Activated T-helper 2 cell treated with anti-CD3 and anti-CD28 coated beads, Interferon-gamma antibody, Interleukin-2, Interleukin-4, amounts not matched to agents 10 μg/mL and 5 μg/mL and 100 μg/mL, durations not matched to agents 14 hours and 24 hours and 36 hours (primary cell): ENCODE measurements at regions of chr11 and their contacts with region 1.

Region 1: DNA sequence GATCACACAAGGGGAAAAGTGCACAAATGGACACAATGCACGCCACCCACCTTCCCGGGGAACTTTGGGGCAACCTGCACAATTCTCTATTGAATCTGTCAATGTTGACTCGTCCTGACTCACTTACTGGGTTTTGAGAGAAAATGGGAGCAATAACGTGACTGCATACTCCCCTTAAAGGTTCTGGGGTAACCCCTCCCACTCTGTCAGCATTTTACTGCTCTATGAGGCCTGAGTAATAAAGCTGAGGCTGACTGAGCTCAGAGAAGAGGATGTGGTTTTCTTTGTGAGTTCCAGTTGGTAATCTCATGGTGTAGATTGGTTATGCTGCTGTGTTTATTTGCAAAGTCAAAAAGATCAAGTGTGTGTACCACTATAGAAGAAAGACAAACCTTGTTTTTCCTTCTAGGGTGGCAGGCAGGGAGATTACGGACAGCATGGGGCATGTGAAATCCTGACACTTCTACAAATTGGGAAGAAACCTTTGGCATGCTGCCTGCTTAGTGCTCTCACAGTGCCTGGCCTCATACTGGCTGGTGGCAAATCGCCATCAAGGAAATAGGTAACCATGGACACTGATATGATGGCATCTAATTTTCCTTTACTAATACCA is 16.1 kb upstream of the APOA1 start:
- DNase-seq: peak; percentile 69
- H3K4me3 Mint-ChIP-seq: peak overlapping the region; percentile 53
- H3K27ac Mint-ChIP-seq: peak overlapping the region; percentile 90
- H3K4me1 Mint-ChIP-seq: peaks cover 52% of the 10 kb centered on the region
- H3K27me3 Mint-ChIP-seq: no peaks in the 10 kb centered on the region

Region 2: GRCh38 chr11:116366980-116367645 is 486.5 kb before region 1 on chr11:
- intact Hi-C with region 1: no loop called
- DNase-seq: no peak
- H3K4me3 Mint-ChIP-seq: no peak overlapping the region
- H3K27ac Mint-ChIP-seq: no peak overlapping the region
- H3K4me1 Mint-ChIP-seq: no peaks in the 10 kb centered on the region
- H3K27me3 Mint-ChIP-seq: no peaks in the 10 kb centered on the region

Region 3: GRCh38 chr11:116762132-116762531 is 91.4 kb before region 1 on chr11:
- intact Hi-C with region 1: no loop called
- DNase-seq: no peak
- H3K4me3 Mint-ChIP-seq: no peak overlapping the region
- H3K27ac Mint-ChIP-seq: no peak overlapping the region
- H3K4me1 Mint-ChIP-seq: peaks cover 9% of the 10 kb centered on the region
- H3K27me3 Mint-ChIP-seq: no peaks in the 10 kb centered on the region

Region 4: DNA sequence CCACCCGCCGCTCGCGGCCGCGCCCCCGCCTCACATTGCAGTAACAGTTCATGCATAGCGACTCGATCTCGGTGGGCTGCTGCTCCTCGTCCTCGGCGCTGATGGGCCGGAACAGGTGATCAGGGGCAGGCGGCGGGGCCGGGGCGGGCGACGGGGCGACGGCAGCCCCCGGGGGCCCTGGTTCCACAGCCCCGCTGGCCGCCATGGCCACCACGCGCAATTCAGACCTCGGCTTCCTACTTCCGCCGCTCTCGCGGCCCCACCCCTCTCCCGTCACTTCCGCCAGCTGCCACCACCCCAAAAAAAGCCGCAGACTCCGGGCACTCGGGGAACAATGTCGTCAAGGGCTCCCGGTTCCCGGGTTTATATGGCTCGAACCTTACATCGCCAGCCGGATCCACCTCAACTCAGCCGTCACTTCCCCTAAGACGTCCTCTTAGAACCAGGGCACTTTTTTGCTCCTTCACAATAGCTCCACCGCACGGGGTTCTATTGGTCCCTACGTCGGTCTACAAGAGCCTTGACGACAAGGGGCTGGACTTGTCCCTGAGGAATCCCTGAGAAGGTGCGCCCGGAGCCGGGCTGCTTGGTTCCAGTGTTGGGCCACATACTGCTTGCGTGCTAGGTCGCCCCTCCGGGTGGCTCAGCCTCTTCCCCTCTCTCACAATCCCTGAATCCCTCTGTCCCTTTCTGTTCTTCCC is 65.6 kb before region 1 on chr11 and contains the start of gene ZPR1:
- intact Hi-C with region 1: loop called (anchors 5 kb)
- DNase-seq: peak; percentile 83
- H3K4me3 Mint-ChIP-seq: peak within 1 kb of the TSS; percentile 90
- H3K27ac Mint-ChIP-seq: peak within 1 kb of the TSS; percentile 81
- H3K4me1 Mint-ChIP-seq: peaks cover 44% of the 10 kb centered on the region
- H3K27me3 Mint-ChIP-seq: no peaks in the 10 kb centered on the region
- total RNA-seq, gene ZPR1: 84.1 and 84.7 TPM in 2 replicates

Region 5: DNA sequence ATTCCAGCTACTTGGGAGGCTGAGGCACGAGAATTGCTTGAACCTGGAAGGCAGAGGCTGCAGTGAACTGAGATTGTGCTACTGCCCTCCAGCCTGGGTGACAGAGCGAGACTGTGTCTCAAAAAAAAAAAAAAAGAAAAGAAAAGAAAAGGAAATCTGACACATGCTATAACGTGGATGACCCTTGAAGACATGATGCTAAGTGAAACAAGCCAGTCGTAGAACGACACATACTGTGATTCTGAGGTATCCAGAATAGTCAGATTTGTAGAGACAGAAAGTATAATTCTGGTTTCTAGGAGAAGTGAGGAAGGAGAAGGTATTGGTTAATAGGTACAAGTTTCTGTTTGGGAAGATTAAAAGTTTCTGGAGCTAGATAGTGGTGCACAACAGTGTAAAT is 55.2 kb before region 1 on chr11:
- intact Hi-C with region 1: no loop called
- DNase-seq: no peak
- H3K4me3 Mint-ChIP-seq: no peak overlapping the region
- H3K27ac Mint-ChIP-seq: no peak overlapping the region
- H3K4me1 Mint-ChIP-seq: no peaks in the 10 kb centered on the region
- H3K27me3 Mint-ChIP-seq: peaks cover 13% of the 10 kb centered on the region

Region 6: DNA sequence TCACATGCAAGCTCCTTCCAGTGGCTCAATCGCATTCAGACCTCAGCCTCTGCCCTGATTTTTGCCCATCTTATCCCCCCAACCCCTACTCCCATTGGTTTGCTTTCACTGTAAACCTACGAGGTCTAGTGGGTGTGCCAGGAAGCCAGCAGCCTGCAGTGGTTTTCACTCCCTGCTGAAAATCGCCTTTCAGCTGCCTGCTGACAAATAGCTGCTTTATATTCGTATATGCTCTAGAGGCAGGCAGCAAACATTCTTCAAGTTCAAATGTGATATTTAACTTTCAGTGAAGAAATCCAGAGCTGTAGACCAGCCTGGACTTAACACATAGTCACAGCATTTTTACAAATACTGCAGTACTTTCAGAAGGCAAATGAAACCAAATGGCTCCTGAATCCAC is 76.6 kb after region 1 on chr11:
- intact Hi-C with region 1: loop called (anchors 2 kb)
- DNase-seq: peak; percentile 43
- H3K4me3 Mint-ChIP-seq: peak overlapping the region; percentile 78
- H3K27ac Mint-ChIP-seq: peak overlapping the region; percentile 83
- H3K4me1 Mint-ChIP-seq: peaks cover 67% of the 10 kb centered on the region
- H3K27me3 Mint-ChIP-seq: no peaks in the 10 kb centered on the region

Region 7: DNA sequence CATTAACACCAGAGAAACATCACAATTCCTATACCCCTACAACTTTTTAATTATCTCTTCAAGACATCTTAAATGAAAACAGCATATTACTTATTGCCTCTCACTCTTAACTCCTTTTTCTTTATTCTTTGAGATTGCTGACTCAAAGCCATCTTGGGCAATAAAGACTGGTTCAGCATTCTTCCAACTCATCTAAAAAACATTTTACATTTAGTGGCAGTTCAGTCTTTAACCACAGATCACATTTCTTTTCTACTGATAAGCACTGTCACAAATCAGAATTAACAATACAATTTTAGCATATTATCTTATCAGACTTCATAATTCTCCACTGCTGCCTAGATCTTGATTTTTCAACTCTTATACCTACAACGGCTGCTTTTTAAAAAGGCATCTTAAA is 210.7 kb after region 1 on chr11:
- intact Hi-C with region 1: loop called (anchors 1 kb)
- DNase-seq: no peak
- H3K4me3 Mint-ChIP-seq: no peak overlapping the region
- H3K27ac Mint-ChIP-seq: peak overlapping the region; percentile 36
- H3K4me1 Mint-ChIP-seq: peaks cover 49% of the 10 kb centered on the region
- H3K27me3 Mint-ChIP-seq: no peaks in the 10 kb centered on the region

Region 8: DNA sequence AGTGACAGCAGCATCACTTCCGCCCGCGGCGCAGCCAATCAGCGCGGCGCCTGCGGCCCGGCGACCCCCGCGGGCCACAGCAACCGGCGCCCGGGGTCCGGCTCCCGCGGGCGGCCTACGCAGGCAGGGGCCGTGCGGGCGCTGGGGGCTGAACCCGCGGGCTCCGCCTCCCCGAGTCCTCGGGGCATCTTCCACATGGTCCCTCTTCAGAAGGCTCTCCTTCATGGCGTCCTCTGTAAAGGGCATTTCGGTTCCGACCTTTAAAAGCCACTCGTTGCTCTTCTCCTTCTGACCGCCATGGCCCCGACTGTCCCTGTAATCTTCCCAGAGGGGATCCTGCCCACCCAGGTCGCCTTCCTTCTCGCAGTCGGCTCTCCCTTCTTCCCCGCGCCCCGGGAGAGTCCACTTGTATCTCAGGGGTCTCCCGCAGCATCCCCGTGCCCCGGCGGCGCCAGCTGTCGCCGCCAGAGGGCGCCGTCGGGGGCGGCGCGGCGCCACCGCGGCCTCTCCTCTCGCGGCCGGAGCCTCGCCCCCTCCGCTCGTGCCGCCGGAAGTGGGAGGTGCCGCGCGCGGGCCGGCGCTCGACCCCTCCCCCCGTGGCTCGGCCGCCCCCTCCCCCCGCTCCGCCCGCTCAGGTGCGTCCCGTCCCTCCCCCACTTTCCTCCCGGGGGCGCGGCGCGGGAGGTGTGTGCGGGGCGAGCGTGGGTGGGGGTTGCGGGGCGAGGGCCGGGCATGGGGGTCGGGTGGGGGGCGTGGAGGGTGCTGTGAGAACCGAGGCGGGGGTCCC is 378.7 kb after region 1 on chr11 and contains the start of gene RNF214:
- intact Hi-C with region 1: loop called (anchors 5 kb)
- DNase-seq: peak; percentile 68
- H3K4me3 Mint-ChIP-seq: peak within 1 kb of the TSS; percentile 98
- H3K27ac Mint-ChIP-seq: peak within 1 kb of the TSS; percentile 100
- H3K4me1 Mint-ChIP-seq: peaks cover 31% of the 10 kb centered on the region
- H3K27me3 Mint-ChIP-seq: no peaks in the 10 kb centered on the region
- total RNA-seq, gene RNF214: 22.7 and 25.8 TPM in 2 replicates